ENCODE measurements at regions of chr10 and their contacts with region 1.

Region 1: GRCh38 chr10:35218339-35218955 is 91.8 kb downstream of the CREM start:
- DNase-seq: peak; percentile 94
- ATAC-seq: peak; percentile 83
- H3K4me3 Mint-ChIP-seq: peak overlapping the region; percentile 47
- H3K27ac Mint-ChIP-seq: peak overlapping the region; percentile 96
- H3K4me1 Mint-ChIP-seq: peaks cover 52% of the 10 kb centered on the region
- H3K27me3 Mint-ChIP-seq: peaks cover 2% of the 10 kb centered on the region

Region 2: DNA sequence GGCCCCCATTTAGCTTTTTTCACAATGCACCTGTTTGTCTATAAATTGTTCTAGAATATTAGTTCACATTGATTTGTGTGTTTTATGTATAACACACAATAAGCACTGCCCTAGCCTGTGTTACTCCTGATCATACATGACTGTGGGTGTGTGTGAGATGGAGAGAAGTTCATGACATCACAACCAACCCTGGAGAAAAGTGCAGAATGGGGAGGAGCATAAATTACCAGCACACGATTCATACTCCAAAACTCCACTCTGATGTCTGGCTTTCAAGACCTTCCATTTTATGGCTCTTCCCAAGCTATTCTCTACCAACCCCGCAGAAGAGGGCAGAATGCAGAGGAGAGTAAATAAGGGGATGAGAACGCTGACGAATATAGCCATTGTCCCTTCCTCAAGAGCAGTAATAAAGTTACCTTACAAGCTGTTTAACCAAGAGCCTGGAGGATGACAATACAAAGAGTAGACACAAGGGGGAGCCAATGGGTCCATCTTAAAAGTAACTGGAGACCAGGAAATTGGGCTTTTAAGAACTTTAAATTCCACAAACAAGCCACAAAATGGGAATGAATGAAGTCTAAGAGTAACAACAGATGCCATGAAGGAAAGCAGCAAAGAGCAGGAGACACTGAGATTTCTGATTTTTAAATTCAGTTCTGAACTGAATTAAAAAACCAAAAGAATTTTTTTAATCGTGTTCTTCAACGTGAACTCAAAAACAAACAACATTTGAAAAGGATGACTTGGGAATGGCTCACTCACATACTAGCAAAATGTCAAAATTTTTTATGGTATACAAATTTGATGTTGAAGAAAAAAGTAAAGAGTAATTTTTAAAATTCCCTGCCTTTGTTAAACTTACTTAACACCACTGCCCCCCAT is 562.9 kb before region 1 on chr10:
- CTCF ChIA-PET with region 1: no interaction called
- POLR2A ChIA-PET with region 1: no interaction called
- intact Hi-C with region 1: loop called in 1 of 2 experiments (anchors 10 kb)
- DNase-seq: peak; percentile 51
- ATAC-seq: peak; percentile 39
- H3K4me3 Mint-ChIP-seq: no peak overlapping the region
- H3K27ac Mint-ChIP-seq: no peak overlapping the region
- H3K4me1 Mint-ChIP-seq: no peaks in the 10 kb centered on the region
- H3K27me3 Mint-ChIP-seq: peaks cover 8% of the 10 kb centered on the region

Region 3: DNA sequence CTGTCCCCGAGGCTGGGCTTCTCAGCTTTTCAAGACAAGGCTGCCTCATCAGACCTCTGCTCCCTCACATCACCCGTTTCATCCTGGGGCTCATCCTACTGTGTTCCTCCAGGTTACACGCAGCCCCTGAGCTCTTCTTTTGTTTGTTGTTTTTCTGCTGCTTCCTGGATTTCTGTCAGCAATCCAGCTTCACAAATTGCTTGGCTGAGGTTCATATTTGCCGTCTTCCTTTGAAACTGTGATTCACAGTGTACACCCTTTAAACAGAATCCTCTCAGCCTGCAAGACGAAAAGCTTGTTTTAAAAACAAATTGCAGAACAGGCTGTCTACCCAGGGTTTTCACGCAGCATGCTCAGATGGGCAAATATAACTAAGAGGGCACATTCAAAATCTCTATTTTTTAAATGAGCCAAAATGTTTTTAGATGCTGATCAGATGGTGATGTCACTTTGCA is 364.3 kb before region 1 on chr10:
- CTCF ChIA-PET with region 1: no interaction called
- POLR2A ChIA-PET with region 1: no interaction called
- intact Hi-C with region 1: no loop called
- DNase-seq: no peak
- ATAC-seq: no peak
- H3K4me3 Mint-ChIP-seq: no peak overlapping the region
- H3K27ac Mint-ChIP-seq: no peak overlapping the region
- H3K4me1 Mint-ChIP-seq: no peaks in the 10 kb centered on the region
- H3K27me3 Mint-ChIP-seq: peaks cover 4% of the 10 kb centered on the region

Region 4: DNA sequence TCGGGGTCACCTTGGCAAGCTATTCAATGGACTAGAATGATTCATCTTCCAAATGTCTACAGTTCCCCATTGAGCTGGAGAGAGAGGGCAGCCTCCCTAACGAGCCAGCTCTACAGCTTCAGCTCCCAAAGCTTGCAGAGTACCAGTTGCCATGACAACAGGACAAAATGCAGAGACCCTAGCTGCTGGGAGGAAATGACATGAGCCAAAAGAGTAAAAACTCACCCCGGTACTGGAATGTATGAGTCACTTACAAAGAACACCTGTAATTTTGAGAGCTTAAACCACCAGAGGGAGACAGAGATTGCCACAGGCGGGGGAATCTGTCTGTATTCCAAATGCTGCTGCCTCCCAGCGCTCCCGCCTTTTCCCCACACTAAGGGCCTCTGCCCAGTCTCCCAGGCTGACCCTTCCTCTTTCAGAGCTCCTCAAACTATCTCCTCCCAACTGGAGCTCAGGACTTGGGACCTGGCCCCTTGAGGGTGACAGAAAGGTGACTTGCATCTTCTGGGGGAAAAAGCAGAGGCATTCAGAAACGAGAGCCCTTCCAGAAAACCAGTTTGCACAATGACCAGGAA is 223.8 kb before region 1 on chr10:
- CTCF ChIA-PET with region 1: interaction called, 19 read pairs
- POLR2A ChIA-PET with region 1: interaction called, 3 read pairs
- intact Hi-C with region 1: loop called (anchors 1 kb)
- DNase-seq: peak; percentile 71
- ATAC-seq: peak; percentile 95
- H3K4me3 Mint-ChIP-seq: no peak overlapping the region
- H3K27ac Mint-ChIP-seq: peak overlapping the region; percentile 47
- H3K4me1 Mint-ChIP-seq: peaks cover 16% of the 10 kb centered on the region
- H3K27me3 Mint-ChIP-seq: no peaks in the 10 kb centered on the region

Region 5: GRCh38 chr10:35090162-35090954 is 128.1 kb before region 1 on chr10 and contains the start of gene CUL2:
- CTCF ChIA-PET with region 1: no interaction called
- POLR2A ChIA-PET with region 1: no interaction called
- intact Hi-C with region 1: loop called in 1 of 2 experiments (anchors 1 kb)
- DNase-seq: peak; percentile 94
- ATAC-seq: peak; percentile 96
- H3K4me3 Mint-ChIP-seq: peak within 1 kb of the TSS; percentile 93
- H3K27ac Mint-ChIP-seq: peak within 1 kb of the TSS; percentile 96
- H3K4me1 Mint-ChIP-seq: peaks cover 45% of the 10 kb centered on the region
- H3K27me3 Mint-ChIP-seq: no peaks in the 10 kb centered on the region
- total RNA-seq, gene CUL2: 42.7 to 45.3 TPM

Region 6: DNA sequence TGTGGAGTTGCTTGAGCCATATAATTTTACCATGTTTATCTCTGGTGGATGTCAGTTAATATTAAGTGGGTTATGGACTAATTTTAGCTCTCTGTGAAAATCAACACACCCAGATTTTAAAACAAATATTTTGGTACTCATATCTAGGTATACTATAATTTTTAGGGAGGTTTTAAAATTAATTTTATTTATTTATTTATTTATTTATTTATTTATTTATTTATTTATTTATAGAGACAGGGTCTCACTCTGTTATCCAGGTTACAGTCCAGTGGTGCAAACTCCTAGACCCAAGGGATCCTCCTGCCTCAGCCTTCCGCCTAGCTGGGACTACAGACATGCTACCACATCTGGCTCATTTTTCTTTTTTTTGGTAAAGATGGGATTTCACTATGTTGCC is 99.1 kb before region 1 on chr10:
- CTCF ChIA-PET with region 1: interaction called, 102 read pairs
- POLR2A ChIA-PET with region 1: no interaction called
- intact Hi-C with region 1: loop called (anchors 1 kb)
- DNase-seq: no peak
- ATAC-seq: no peak
- H3K4me3 Mint-ChIP-seq: no peak overlapping the region
- H3K27ac Mint-ChIP-seq: no peak overlapping the region
- H3K4me1 Mint-ChIP-seq: peaks cover 12% of the 10 kb centered on the region
- H3K27me3 Mint-ChIP-seq: no peaks in the 10 kb centered on the region

Region 7: DNA sequence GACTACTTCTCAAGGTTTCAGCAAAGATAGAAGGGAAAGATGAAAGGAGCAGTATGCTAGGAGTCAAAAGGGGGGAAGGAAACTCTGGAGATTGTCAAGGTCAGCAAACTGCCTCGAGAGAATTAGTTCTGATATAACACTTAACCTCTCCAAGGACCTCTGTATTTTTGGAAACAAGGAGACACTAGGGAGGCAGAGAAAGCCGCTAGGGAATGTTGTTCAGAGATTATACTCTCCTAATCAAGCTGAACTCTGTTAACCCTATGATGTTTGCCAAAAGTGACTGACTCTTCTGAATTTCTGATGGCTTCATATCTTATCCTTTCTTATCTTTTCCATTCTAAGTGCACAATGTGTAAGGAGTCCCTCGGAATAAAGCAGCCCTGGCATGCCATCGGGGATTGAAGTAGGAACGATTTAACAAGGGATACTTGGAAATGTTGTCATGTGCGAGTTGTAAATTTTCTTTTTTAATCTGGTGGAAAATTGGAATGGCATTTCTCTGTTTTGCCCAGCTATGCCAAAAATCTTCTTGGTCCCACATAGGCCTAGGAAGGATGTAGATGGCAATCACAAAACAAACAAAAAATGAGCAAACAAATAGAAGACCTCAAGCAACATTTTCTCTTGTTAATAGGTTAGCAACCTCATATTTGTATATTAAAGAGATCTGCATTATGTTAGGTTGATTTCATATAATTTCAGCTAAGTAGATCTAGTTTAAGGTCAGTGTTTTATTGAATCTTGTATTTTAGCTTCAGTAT is 64.5 kb before region 1 on chr10:
- CTCF ChIA-PET with region 1: interaction called, 3 read pairs
- POLR2A ChIA-PET with region 1: no interaction called
- intact Hi-C with region 1: loop called (anchors 1 kb)
- DNase-seq: no peak
- ATAC-seq: no peak
- H3K4me3 Mint-ChIP-seq: no peak overlapping the region
- H3K27ac Mint-ChIP-seq: peak overlapping the region; percentile 23
- H3K4me1 Mint-ChIP-seq: peaks cover 49% of the 10 kb centered on the region
- H3K27me3 Mint-ChIP-seq: no peaks in the 10 kb centered on the region

Measured in activated CD4-positive, alpha-beta T cell treated with anti-CD3 and anti-CD28 coated beads for 36 hours (primary cell).